HEK293T (cell line): ENCODE measurements at regions of chr5 and their contacts with region 1.

Region 1: GRCh38 chr5:140157032-140157803 is 17.8 kb upstream of the CYSTM1 start:
- DNase-seq: peak; percentile 92

Region 2: GRCh38 chr5:140073296-140073695 is 83.9 kb before region 1 on chr5:
- CTCF ChIA-PET with region 1: interaction called, 29 read pairs
- POLR2A ChIA-PET with region 1: no interaction called
- DNase-seq: no peak

Region 3: GRCh38 chr5:140145818-140146522 is 11.2 kb before region 1 on chr5:
- CTCF ChIA-PET with region 1: interaction called, 15 read pairs
- POLR2A ChIA-PET with region 1: no interaction called
- DNase-seq: no peak

Region 4: GRCh38 chr5:140196115-140196814 is 39.0 kb after region 1 on chr5:
- CTCF ChIA-PET with region 1: no interaction called
- POLR2A ChIA-PET with region 1: no interaction called
- DNase-seq: no peak